ENCODE measurements at regions of chrX and their contacts with region 1.

Region 1: GRCh38 chrX:68710870-68711576 is 63.6 kb downstream of the STARD8 start:
- DNase-seq: peak; percentile 28 to 49
- H3K4me3 ChIP-seq: no peak overlapping the region
- H3K27ac ChIP-seq: no peak overlapping the region
- H3K4me1 ChIP-seq: no peaks in the 10 kb centered on the region
- H3K27me3 ChIP-seq: no peaks in the 10 kb centered on the region
- CTCF ChIP-seq: peak; percentile 27 to 68 (median 51)
- POLR2A ChIP-seq: no peak

Region 2: GRCh38 chrX:68196939-68197791 is 513.9 kb before region 1 on chrX:
- intact Hi-C with region 1: loop called (anchors 10 kb)
- DNase-seq: peak; percentile 13 to 26
- H3K4me3 ChIP-seq: no peak overlapping the region
- H3K27ac ChIP-seq: no peak overlapping the region
- H3K4me1 ChIP-seq: no peaks in the 10 kb centered on the region
- H3K27me3 ChIP-seq: no peaks in the 10 kb centered on the region
- CTCF ChIP-seq: peak; percentile 64 to 68 (median 65)
- POLR2A ChIP-seq: no peak